ENCODE measurements at regions of chr7 and their contacts with region 1.

Region 1: DNA sequence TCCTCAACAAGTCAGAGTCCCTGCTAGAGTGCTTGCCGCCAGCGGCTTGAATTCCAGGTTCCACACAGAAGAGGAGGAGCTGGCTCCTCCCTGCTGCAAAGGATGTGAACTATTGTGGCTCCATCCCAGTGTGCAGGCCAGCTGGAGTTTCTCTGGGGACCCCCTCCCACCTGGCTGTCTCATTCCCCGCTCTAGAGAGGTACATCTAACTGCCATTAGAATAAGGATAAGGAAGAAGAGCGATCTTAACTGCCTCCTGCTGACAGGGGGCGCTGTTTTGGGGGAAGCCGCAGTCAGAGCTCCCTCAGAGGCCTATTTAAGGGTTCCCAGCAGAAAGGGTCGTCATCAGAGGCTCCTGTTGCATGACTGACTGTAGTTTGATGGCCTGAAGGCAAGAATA is 40.8 kb upstream of the HECW1 start:
- DNase-seq: no peak

Region 2: DNA sequence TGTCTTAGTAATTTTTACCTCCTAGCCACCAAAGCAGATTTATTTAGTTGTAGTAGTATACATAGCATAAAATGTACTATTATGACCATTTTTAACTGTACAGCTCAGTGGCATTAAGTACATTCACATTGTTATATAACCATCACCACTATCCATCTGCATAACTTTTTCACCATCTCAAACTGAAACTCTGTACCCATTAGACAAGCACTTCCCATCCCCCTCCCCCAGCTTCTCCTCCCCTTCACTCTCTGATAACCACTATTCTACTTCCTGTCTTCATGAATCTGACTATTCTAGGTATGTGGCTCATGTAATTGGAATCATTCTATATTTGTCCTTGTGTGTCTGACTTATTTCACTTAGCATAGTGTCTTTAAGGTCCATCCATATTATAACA is 67.5 kb before region 1 on chr7:
- intact Hi-C with region 1: no loop called
- DNase-seq: no peak

Region 3: GRCh38 chr7:43099750-43100149 is 28.1 kb after region 1 on chr7:
- intact Hi-C with region 1: loop called in 1 of 2 experiments (anchors 1 kb)
- DNase-seq: no peak

Measured in posterior vena cava (tissue), 2 donors.